ENCODE measurements at regions of chr10 and their contacts with region 1.

Region 1: GRCh38 chr10:103465411-103466179 is 6.9 kb upstream of the CALHM1 start:
- DNase-seq: peak in 1 of 3 donors; percentile 46
- ATAC-seq: no peak
- H3K4me3 ChIP-seq: no peak overlapping the region
- H3K27ac ChIP-seq: no peak overlapping the region
- H3K4me1 ChIP-seq: no peaks in the 10 kb centered on the region
- H3K27me3 ChIP-seq: no peaks in the 10 kb centered on the region

Region 2: DNA sequence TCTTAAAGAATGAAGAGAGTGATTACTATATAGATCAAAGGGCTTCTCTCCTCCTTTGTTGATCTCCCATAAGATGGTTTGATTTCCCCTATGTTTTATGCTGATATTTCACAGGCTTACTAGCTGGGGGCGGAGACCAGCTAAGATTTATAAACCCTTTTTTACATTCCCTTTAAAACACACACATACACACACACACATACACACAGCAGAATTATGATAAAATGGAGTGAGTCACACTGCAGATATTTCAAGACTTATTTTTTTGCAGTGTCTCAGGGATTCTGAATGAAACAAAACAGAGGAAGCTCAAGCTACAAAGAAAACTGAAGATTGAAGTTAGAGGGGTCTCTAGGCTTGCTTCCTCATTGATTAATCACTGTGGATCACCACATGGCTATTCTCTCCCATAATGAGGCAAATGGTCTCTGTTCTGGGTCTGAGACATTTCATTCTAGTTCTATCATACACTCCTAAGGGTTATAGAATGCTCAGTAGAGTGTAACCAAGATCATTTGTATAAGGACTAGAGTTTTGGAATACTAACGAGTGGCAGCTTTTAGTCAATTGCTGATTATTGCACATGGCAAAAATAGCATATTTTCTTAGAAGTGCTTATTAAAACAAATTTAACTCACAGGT is 170.1 kb before region 1 on chr10:
- intact Hi-C with region 1: no loop called
- DNase-seq: no peak
- ATAC-seq: no peak
- H3K4me3 ChIP-seq: no peak overlapping the region
- H3K27ac ChIP-seq: no peak overlapping the region
- H3K4me1 ChIP-seq: no peaks in the 10 kb centered on the region
- H3K27me3 ChIP-seq: no peaks in the 10 kb centered on the region

Region 3: GRCh38 chr10:103394180-103394579 is 71.4 kb before region 1 on chr10:
- intact Hi-C with region 1: no loop called
- DNase-seq: no peak
- ATAC-seq: no peak
- H3K4me3 ChIP-seq: no peak overlapping the region
- H3K27ac ChIP-seq: no peak overlapping the region
- H3K4me1 ChIP-seq: peaks cover 7% of the 10 kb centered on the region
- H3K27me3 ChIP-seq: no peaks in the 10 kb centered on the region

Region 4: GRCh38 chr10:103488251-103488650 is 22.7 kb after region 1 on chr10:
- intact Hi-C with region 1: loop called in 1 of 4 experiments (anchors 2 kb)
- DNase-seq: no peak
- ATAC-seq: no peak
- H3K4me3 ChIP-seq: no peak overlapping the region
- H3K27ac ChIP-seq: no peak overlapping the region
- H3K4me1 ChIP-seq: no peaks in the 10 kb centered on the region
- H3K27me3 ChIP-seq: no peaks in the 10 kb centered on the region

Region 5: DNA sequence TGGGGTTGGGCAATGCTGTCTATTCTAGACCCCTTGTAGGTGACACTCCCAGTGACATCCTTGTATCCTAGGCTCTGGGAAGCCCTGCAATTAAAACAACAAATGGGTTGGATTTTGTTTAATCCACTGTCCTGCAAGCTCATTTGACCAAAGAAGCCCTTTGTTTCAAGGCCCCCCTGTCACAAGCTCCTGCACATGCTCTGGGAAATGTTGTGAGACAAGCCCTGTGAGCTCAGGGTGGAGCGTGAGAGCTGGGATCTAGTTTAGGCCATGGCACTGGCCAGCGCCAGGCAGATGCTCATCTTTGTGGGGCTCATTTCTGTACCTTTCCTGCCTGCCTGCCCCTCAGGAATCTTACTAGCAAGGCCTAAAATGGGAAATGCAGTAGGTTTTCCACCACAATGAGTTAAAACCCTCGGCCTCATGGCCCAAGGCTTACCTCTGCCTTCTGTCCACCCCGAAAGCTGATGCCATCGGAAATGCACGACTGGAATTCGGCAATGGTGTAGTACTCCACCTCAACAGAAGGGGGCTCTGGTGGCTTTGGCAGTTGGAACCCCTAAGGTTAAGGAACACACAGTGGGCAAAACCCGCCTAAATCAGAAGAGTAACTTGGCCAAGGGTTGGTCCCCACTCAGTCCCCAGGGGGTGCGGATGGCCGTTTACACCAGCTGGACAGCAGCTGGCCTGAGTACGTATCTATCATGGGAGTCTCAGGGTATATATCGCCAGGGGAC is 139.9 kb after region 1 on chr10:
- intact Hi-C with region 1: no loop called
- DNase-seq: peak; percentile 50 to 70 (median 68)
- ATAC-seq: peak in 1 of 2 donors; percentile 52
- H3K4me3 ChIP-seq: no peak overlapping the region
- H3K27ac ChIP-seq: no peak overlapping the region
- H3K4me1 ChIP-seq: no peaks in the 10 kb centered on the region
- H3K27me3 ChIP-seq: no peaks in the 10 kb centered on the region

Measured in right cardiac atrium (tissue), 5 donors.